GM12878 (cell line): ENCODE measurements at regions of chr3 and their contacts with region 1.

Region 1: DNA sequence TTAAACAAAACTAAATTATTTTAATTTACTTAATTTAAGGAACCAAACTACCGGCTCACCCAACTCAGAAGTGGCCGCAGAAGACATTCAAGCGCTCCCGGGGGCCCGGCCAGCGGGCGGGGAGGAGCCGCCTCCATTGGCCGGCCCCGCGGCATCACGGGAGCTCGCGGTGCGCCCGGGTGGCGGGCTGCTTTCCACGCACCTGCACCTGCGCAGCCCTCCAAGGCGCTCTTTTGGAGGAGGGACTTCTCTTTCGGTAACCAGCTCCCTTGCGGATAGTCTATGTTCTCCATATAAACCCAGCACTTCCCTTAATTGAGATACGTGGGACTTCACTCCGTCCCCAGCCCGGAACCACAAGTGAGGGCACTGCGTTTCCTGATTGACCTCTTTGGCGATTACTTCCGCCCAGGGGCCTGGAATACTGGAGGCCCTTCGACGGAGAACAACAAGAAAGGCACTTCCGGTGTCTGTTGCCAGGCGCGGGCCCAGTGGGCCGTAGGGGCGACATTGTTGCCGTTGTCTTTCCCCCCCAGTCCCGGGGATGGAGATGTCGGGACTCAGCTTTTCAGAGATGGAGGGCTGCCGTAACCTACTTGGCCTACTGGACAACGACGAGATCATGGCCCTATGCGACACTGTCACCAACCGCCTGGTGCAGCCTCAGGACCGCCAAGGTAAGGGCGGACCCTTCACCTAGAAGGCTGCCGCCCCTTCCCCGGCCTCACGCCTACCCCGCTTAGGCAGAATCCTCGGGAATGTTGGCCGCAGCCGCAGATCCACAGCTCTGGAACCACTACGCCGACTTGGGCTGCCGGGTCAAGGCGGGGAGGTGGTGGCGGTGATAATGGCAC is at the start of gene C3orf38:
- DNase-seq: peak; percentile 64
- ATAC-seq: peak; percentile 88
- H3K4me3 ChIP-seq: peak within 1 kb of the TSS; percentile 77
- H3K27ac ChIP-seq: peak within 1 kb of the TSS; percentile 96
- H3K4me1 ChIP-seq: no peaks in the 10 kb centered on the region; the same call in 1 of the 2 replicates
- H3K27me3 ChIP-seq: no peaks in the 10 kb centered on the region
- CTCF ChIP-seq: no peak
- EP300 ChIP-seq: no peak
- POLR2A ChIP-seq: peak; percentile 82
- RAD21 ChIP-seq: no peak
- polyA plus RNA-seq, gene C3orf38: 29.1 to 37.7 TPM

Region 2: GRCh38 chr3:88058591-88059368 is 91.0 kb before region 1 on chr3 and contains the starts of genes CGGBP1 and ZNF654:
- CTCF ChIA-PET with region 1: interaction called, 4 read pairs
- POLR2A ChIA-PET with region 1: interaction called, 27 read pairs
- RAD21 ChIA-PET with region 1: interaction called, 5 read pairs
- SMC1A ChIA-PET with region 1: interaction called, 4 read pairs
- in situ Hi-C with region 1: no loop called
- intact Hi-C with region 1: loop called (anchors 2 kb)
- DNase-seq: peak; percentile 95
- ATAC-seq: peak; percentile 93
- H3K4me3 ChIP-seq: peak within 1 kb of the TSS; percentile 94
- H3K27ac ChIP-seq: peak within 1 kb of the TSS; percentile 86
- H3K4me1 ChIP-seq: peaks cover 2% of the 10 kb centered on the region; the same call in 1 of the 2 replicates
- H3K27me3 ChIP-seq: no peaks in the 10 kb centered on the region
- CTCF ChIP-seq: no peak
- EP300 ChIP-seq: no peak
- POLR2A ChIP-seq: peak; percentile 85
- RAD21 ChIP-seq: no peak
- polyA plus RNA-seq, gene CGGBP1: 27.8 to 30.0 TPM
- polyA plus RNA-seq, gene ZNF654: 2.7 to 2.8 TPM

Region 3: GRCh38 chr3:88131695-88132094 is 18.0 kb before region 1 on chr3:
- CTCF ChIA-PET with region 1: no interaction called
- POLR2A ChIA-PET with region 1: interaction called, 10 read pairs
- RAD21 ChIA-PET with region 1: interaction called, 3 read pairs
- SMC1A ChIA-PET with region 1: interaction called, 6 read pairs
- in situ Hi-C with region 1: no loop called
- intact Hi-C with region 1: no loop called
- DNase-seq: no peak
- ATAC-seq: no peak
- H3K4me3 ChIP-seq: no peak overlapping the region
- H3K27ac ChIP-seq: no peak overlapping the region
- H3K4me1 ChIP-seq: no peaks in the 10 kb centered on the region
- H3K27me3 ChIP-seq: no peaks in the 10 kb centered on the region
- CTCF ChIP-seq: no peak
- EP300 ChIP-seq: no peak
- POLR2A ChIP-seq: no peak
- RAD21 ChIP-seq: no peak

Region 4: GRCh38 chr3:88231207-88231606 is 81.5 kb after region 1 on chr3:
- CTCF ChIA-PET with region 1: no interaction called
- POLR2A ChIA-PET with region 1: no interaction called
- RAD21 ChIA-PET with region 1: no interaction called
- SMC1A ChIA-PET with region 1: no interaction called
- in situ Hi-C with region 1: no loop called
- intact Hi-C with region 1: no loop called
- DNase-seq: no peak
- ATAC-seq: no peak
- H3K4me3 ChIP-seq: no peak overlapping the region
- H3K27ac ChIP-seq: no peak overlapping the region
- H3K4me1 ChIP-seq: no peaks in the 10 kb centered on the region
- H3K27me3 ChIP-seq: no peaks in the 10 kb centered on the region; a peak in 1 of 4 replicates
- CTCF ChIP-seq: no peak
- EP300 ChIP-seq: no peak
- POLR2A ChIP-seq: no peak
- RAD21 ChIP-seq: no peak

Region 5: GRCh38 chr3:88334187-88334868 is 184.6 kb after region 1 on chr3:
- CTCF ChIA-PET with region 1: no interaction called
- POLR2A ChIA-PET with region 1: no interaction called
- RAD21 ChIA-PET with region 1: no interaction called
- SMC1A ChIA-PET with region 1: no interaction called
- in situ Hi-C with region 1: no loop called
- intact Hi-C with region 1: no loop called
- DNase-seq: no peak
- ATAC-seq: no peak
- H3K4me3 ChIP-seq: no peak overlapping the region
- H3K27ac ChIP-seq: no peak overlapping the region
- H3K4me1 ChIP-seq: no peaks in the 10 kb centered on the region
- H3K27me3 ChIP-seq: no peaks in the 10 kb centered on the region
- CTCF ChIP-seq: no peak
- EP300 ChIP-seq: no peak
- POLR2A ChIP-seq: no peak
- RAD21 ChIP-seq: no peak